OCI-LY7 (cell line): ENCODE measurements at regions of chr2 and their contacts with region 1.

Region 1: DNA sequence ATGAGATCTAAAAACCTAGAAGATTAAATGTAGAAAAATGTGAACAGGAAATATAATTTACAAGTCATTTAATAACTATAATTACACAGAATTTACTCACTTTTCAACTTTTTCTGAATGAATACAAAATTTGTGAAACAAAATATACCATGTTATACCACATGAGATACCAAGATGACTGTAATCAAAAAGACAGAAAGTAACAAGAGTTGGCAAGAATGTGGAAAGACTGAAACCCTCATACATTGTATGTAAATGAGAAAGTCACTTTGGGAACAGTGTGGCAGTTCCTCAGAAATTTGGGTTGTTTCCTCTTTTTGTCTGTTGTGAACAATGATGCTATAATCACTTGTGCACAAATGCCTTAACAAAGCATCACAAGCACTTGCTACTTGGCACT is 145.4 kb upstream of the ZNF804A start:
- DNase-seq: peak; percentile 48
- H3K4me3 ChIP-seq: peak overlapping the region; percentile 18
- H3K27ac ChIP-seq: peak overlapping the region; percentile 73
- H3K4me1 ChIP-seq: peaks cover 49% of the 10 kb centered on the region
- CTCF ChIP-seq: no peak

Region 2: DNA sequence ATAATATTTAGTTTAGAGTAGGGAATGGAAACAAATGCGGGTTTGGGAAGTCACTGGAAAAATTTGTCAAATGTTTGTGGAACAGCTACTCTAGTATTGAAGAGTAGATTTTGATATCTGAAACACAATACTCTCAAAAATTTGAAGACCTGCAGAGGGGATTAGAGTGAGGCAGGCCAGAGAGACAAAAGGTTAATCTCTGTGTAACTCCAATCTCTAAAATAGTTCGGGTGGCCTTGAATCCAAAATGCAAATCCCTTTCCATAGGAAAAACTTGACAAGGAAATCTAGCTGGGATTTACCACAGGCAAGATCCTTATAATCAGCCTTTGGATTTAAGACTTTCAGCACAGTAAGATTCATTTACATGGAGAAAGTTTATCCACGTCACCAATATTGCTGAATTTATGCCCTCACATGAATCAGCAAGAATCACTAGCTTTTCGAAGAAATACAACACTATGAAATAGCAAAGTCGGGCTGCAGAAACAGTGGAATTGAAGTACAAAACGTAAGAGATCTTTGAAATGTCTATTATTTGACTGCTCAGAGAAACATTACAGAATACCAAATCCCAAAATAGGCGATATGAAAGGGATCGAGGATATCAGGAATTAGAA is 278.3 kb before region 1 on chr2:
- CTCF ChIA-PET with region 1: no interaction called
- POLR2A ChIA-PET with region 1: no interaction called
- intact Hi-C with region 1: no loop called
- DNase-seq: no peak
- H3K4me3 ChIP-seq: no peak overlapping the region
- H3K27ac ChIP-seq: no peak overlapping the region
- H3K4me1 ChIP-seq: no peaks in the 10 kb centered on the region
- CTCF ChIP-seq: no peak

Region 3: GRCh38 chr2:184463102-184463865 is 10.4 kb after region 1 on chr2:
- CTCF ChIA-PET with region 1: no interaction called
- POLR2A ChIA-PET with region 1: interaction called, 38 read pairs
- intact Hi-C with region 1: no loop called
- DNase-seq: peak; percentile 59
- H3K4me3 ChIP-seq: no peak overlapping the region
- H3K27ac ChIP-seq: peak overlapping the region; percentile 5
- H3K4me1 ChIP-seq: peaks cover 22% of the 10 kb centered on the region
- CTCF ChIP-seq: no peak

Region 4: GRCh38 chr2:184472481-184472880 is 19.6 kb after region 1 on chr2:
- CTCF ChIA-PET with region 1: no interaction called
- POLR2A ChIA-PET with region 1: interaction called, 11 read pairs
- intact Hi-C with region 1: no loop called
- DNase-seq: no peak
- H3K4me3 ChIP-seq: no peak overlapping the region
- H3K27ac ChIP-seq: no peak overlapping the region
- H3K4me1 ChIP-seq: no peaks in the 10 kb centered on the region
- CTCF ChIP-seq: no peak

Region 5: DNA sequence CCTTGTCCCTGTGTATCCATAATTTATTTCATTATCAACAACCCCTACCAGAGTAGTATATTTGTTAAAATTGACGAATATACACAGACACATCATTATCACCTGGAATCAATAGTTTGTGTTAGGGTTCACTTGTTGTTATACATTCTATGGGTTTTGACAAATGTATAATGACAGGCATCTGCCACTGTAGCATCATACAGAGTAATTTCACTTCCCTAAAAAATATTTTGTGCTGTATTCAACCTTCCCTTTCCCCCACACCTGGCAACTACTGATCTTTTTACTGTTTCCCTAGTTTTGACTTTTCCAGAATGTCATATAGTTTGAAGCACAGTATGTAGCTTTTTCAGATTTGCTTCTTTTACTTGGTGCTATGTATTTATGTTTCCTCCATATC is 277.4 kb after region 1 on chr2:
- CTCF ChIA-PET with region 1: no interaction called
- POLR2A ChIA-PET with region 1: interaction called, 4 read pairs
- intact Hi-C with region 1: loop called (anchors 5 kb)
- DNase-seq: peak; percentile 78
- H3K4me3 ChIP-seq: peak overlapping the region; percentile 26
- H3K27ac ChIP-seq: peak overlapping the region; percentile 79
- H3K4me1 ChIP-seq: peaks cover 82% of the 10 kb centered on the region
- CTCF ChIP-seq: no peak